ENCODE measurements at regions of chr2 and their contacts with region 1.

Region 1: DNA sequence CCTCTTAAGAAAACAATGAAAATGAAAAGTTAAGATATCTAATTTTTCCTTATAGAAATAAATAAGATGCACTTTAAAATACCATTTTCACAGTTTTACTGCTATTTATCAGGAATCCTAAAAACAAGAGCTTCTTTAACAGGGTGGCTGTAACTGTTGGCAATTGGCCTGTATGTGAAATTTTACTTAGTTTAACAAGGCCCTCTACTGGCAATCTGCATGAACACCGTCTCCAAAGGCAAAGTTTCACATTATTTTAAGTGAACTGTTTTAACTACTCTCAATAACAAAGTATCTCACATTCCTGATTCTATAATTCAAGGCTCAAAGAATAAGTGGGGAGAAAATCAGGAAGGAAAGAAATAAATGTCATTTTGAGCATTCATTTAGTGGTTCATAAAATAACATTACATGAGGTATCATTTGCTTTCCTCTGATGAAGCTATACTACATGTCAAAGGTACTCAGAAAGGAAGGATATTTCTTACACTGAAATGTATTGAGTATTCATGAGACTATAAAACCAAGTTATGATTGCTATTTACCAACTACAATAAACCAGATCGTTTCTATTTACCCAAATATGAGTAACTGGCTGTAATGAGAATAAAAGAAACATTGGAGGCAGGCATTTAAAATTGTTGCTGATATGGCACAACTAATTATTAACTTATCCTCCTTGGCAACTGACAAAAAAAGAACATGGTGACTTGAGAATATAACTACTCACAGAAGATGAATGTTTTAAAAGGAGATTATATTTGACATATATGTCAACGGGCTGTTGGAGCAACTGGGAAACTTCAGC is 7.0 kb downstream of the NCKAP5 start:
- DNase-seq: no peak
- ATAC-seq: peak; percentile 80
- H3K4me3 ChIP-seq: no peak overlapping the region
- H3K27ac ChIP-seq: no peak overlapping the region
- H3K4me1 ChIP-seq: no peaks in the 10 kb centered on the region
- H3K27me3 ChIP-seq: no peaks in the 10 kb centered on the region; a peak in 1 of 4 replicates
- CTCF ChIP-seq: peak; percentile 58 to 65 (median 59); a peak in 5 of 6 replicates
- EP300 ChIP-seq: no peak
- POLR2A ChIP-seq: no peak
- RAD21 ChIP-seq: peak; percentile 50

Region 2: DNA sequence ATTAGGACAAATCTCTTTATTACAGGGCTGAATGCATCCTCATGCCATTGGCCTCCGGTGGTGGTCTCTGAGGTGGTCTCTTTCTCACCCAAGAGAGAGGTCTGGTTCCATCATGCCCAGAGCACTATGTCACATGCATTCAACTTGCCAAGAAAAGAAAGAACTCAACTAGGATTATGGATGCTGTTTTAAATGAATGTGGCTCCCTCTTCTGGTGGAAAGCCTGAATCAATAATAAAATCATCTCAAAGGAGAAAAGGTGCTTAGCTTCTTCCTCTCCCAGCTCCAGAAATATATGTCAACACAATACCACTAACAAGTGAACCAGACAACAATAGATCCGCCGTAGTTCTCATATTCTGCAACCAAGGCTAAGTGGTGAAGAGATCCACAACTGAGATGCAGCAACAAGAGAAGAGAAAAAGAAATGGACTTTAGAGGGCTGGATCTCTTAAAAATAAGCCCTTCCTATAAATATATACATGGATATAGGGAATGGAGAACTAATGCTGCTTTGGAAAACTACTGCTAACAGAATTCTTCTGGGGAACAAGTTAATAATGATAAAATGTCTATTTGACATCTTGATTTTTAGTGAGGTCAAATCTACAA is 389.8 kb before region 1 on chr2:
- CTCF ChIA-PET with region 1: interaction called, 19 read pairs
- POLR2A ChIA-PET with region 1: no interaction called
- RAD21 ChIA-PET with region 1: interaction called, 14 read pairs
- SMC1A ChIA-PET with region 1: interaction called, 11 read pairs
- in situ Hi-C with region 1: no loop called
- intact Hi-C with region 1: loop called (anchors 2 kb)
- DNase-seq: peak; percentile 3
- ATAC-seq: peak; percentile 72
- H3K4me3 ChIP-seq: no peak overlapping the region
- H3K27ac ChIP-seq: no peak overlapping the region
- H3K4me1 ChIP-seq: no peaks in the 10 kb centered on the region
- H3K27me3 ChIP-seq: no peaks in the 10 kb centered on the region; a peak in 2 of 4 replicates
- CTCF ChIP-seq: peak; percentile 36 to 72 (median 39); a peak in 5 of 6 replicates
- EP300 ChIP-seq: no peak
- POLR2A ChIP-seq: no peak
- RAD21 ChIP-seq: peak; percentile 75

Region 3: DNA sequence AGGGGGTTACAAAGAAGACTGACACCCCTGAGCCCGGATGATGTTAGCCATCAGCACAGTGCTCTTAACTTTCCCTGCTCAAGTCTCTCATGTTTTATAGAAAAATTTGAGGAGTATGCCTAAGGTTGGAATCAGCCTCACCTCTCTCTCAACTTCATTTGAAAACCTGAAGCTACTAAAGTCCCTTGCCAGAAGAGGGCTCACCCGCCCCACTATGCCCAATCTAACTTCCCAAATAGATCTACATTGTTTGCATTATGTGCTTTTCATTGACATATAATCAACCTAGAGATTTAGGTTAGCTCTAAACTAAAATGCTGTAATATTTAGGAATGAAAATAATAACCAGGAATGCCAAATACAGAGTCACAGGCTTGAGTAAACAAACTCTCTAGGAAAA is 298.4 kb before region 1 on chr2:
- CTCF ChIA-PET with region 1: interaction called, 58 read pairs
- POLR2A ChIA-PET with region 1: no interaction called
- RAD21 ChIA-PET with region 1: interaction called, 38 read pairs
- SMC1A ChIA-PET with region 1: interaction called, 45 read pairs
- in situ Hi-C with region 1: no loop called
- intact Hi-C with region 1: loop called (anchors 1 kb)
- DNase-seq: no peak
- ATAC-seq: peak; percentile 46; the same call in 1 of the 3 replicates
- H3K4me3 ChIP-seq: no peak overlapping the region
- H3K27ac ChIP-seq: no peak overlapping the region
- H3K4me1 ChIP-seq: no peaks in the 10 kb centered on the region
- H3K27me3 ChIP-seq: no peaks in the 10 kb centered on the region; a peak in 1 of 4 replicates
- CTCF ChIP-seq: peak in 1 of 3 experiments; percentile 41; a peak in 2 of 6 replicates
- EP300 ChIP-seq: no peak
- POLR2A ChIP-seq: no peak
- RAD21 ChIP-seq: no peak

Region 4: DNA sequence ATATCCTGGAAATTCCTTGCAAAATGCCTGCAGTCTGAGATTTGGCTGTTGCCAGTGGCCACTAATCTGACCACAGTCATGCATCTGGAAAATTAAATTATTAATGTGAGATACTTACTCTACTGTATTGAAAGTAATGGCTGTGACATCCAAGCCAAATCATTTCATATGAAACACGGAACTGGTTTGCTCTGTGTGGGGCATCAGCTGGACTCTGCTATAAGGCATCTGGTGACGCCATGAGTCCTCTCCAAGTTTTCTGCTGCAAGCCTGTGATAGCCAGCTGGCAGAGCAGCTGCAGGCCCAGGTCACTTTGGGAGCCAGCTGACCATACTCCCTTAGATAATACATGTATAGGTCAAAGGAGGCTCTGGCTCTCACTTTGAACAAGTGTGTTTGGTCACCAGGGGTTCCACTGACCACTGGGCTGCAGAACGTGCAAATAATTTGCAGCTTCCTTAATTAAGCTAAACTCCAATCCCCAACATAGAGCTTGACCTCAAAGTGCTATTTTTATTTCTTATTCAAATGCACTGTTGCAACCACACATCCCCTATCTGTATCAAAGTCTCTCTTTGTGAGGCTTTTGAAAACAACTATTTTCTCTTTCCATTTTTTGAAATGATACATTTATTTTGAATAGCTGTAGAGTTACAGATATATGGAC is 145.9 kb before region 1 on chr2:
- CTCF ChIA-PET with region 1: interaction called, 11 read pairs
- POLR2A ChIA-PET with region 1: no interaction called
- RAD21 ChIA-PET with region 1: interaction called, 32 read pairs
- SMC1A ChIA-PET with region 1: interaction called, 46 read pairs
- in situ Hi-C with region 1: no loop called
- intact Hi-C with region 1: loop called (anchors 2 kb)
- DNase-seq: no peak
- ATAC-seq: peak; percentile 22
- H3K4me3 ChIP-seq: no peak overlapping the region
- H3K27ac ChIP-seq: no peak overlapping the region
- H3K4me1 ChIP-seq: no peaks in the 10 kb centered on the region
- H3K27me3 ChIP-seq: peaks cover 0 to 4% of the 10 kb centered on the region in 2 experiments; a peak in 1 of 4 replicates
- CTCF ChIP-seq: no peak
- EP300 ChIP-seq: no peak
- POLR2A ChIP-seq: no peak
- RAD21 ChIP-seq: no peak

Region 5: GRCh38 chr2:133498662-133499585 is 62.3 kb before region 1 on chr2:
- CTCF ChIA-PET with region 1: interaction called, 23 read pairs
- POLR2A ChIA-PET with region 1: no interaction called
- RAD21 ChIA-PET with region 1: interaction called, 19 read pairs
- SMC1A ChIA-PET with region 1: interaction called, 45 read pairs
- in situ Hi-C with region 1: no loop called
- intact Hi-C with region 1: loop called (anchors 1 kb)
- DNase-seq: peak; percentile 72
- ATAC-seq: peak; percentile 75
- H3K4me3 ChIP-seq: no peak overlapping the region
- H3K27ac ChIP-seq: no peak overlapping the region
- H3K4me1 ChIP-seq: no peaks in the 10 kb centered on the region
- H3K27me3 ChIP-seq: no peaks in the 10 kb centered on the region
- CTCF ChIP-seq: peak in 1 of 3 experiments; percentile 22; a peak in 1 of 6 replicates
- EP300 ChIP-seq: peak; percentile 72 to 81; a peak in 2 of 4 replicates
- POLR2A ChIP-seq: no peak
- RAD21 ChIP-seq: no peak

Region 6: DNA sequence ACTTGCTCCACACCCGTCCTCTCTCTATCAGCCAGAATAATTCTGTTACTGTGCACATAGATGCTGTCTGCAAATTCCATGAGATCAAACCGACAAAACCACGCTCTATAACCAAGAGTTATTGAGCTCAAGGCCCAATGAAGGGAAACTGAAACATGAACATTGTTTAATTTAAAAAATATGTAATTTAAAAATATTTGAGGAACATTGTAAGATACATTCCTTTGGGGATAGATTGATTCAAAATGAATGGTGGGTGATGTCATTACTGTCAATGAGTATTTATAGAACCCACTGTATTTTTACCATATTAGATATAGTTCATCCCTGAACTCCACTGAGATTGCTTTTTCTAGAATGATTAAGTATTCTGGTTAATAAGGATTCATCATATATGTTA is 43.4 kb before region 1 on chr2:
- CTCF ChIA-PET with region 1: interaction called, 57 read pairs
- POLR2A ChIA-PET with region 1: no interaction called
- RAD21 ChIA-PET with region 1: interaction called, 31 read pairs
- SMC1A ChIA-PET with region 1: interaction called, 36 read pairs
- in situ Hi-C with region 1: no loop called
- intact Hi-C with region 1: no loop called
- DNase-seq: no peak
- ATAC-seq: no peak
- H3K4me3 ChIP-seq: no peak overlapping the region
- H3K27ac ChIP-seq: no peak overlapping the region
- H3K4me1 ChIP-seq: no peaks in the 10 kb centered on the region
- H3K27me3 ChIP-seq: no peaks in the 10 kb centered on the region
- CTCF ChIP-seq: no peak
- EP300 ChIP-seq: no peak
- POLR2A ChIP-seq: no peak
- RAD21 ChIP-seq: no peak

Region 7: DNA sequence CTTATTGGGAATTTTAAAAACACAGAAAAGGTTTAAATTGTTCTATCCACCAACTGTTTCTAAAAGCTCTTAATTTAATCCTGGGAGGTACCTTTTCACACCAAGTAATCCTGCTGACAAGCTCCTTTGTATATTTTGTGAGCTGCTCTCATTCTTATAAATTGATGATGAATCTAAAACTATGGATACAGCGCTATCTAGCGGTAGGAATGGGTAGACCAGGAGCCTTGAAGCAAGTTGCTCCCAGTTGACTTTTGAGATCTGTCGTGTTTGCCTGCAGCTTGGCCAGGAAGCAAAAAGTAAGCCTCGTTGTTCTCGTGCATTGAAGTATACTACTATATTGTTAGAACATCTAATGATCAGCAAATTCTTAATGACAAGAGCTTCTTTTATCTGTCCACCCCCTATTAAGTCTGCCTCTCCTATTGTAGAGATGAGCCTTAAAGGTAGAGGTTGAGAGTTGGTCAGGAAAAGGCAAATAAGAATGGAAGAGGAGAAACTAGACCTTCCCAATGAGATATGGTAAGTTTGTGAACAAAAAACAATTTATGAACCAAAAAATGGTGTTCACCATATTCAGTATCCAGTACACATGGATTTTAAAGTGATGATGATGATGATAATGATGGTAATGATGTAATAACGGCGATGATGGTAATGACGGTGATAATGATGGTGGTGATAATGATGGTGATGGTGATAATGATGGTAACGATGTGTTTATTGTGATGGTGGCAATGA is 219.0 kb after region 1 on chr2:
- CTCF ChIA-PET with region 1: interaction called, 10 read pairs
- POLR2A ChIA-PET with region 1: no interaction called
- RAD21 ChIA-PET with region 1: interaction called, 3 read pairs
- SMC1A ChIA-PET with region 1: no interaction called
- in situ Hi-C with region 1: no loop called
- intact Hi-C with region 1: no loop called
- DNase-seq: peak; percentile 1
- ATAC-seq: peak; percentile 74
- H3K4me3 ChIP-seq: no peak overlapping the region
- H3K27ac ChIP-seq: no peak overlapping the region
- H3K4me1 ChIP-seq: no peaks in the 10 kb centered on the region
- H3K27me3 ChIP-seq: 0 out of 4 replicates have a peak, but pooled peaks cover 0 to 3% of the 10 kb centered on the region in 2 experiments
- CTCF ChIP-seq: peak; percentile 70 to 72 (median 71)
- EP300 ChIP-seq: no peak
- POLR2A ChIP-seq: no peak
- RAD21 ChIP-seq: peak; percentile 66